Cardiac septum (tissue), 1 donor: ENCODE measurements at regions of chr6 and their contacts with region 1.

Region 1: GRCh38 chr6:39347906-39348585 is 25.5 kb upstream of the KCNK16 start:
- DNase-seq: no peak

Region 2: GRCh38 chr6:39302669-39303424 is 45.2 kb before region 1 on chr6:
- intact Hi-C with region 1: no loop called
- DNase-seq: peak; percentile 85

Region 3: GRCh38 chr6:39330057-39330456 is 18.0 kb before region 1 on chr6:
- intact Hi-C with region 1: no loop called
- DNase-seq: no peak

Region 4: DNA sequence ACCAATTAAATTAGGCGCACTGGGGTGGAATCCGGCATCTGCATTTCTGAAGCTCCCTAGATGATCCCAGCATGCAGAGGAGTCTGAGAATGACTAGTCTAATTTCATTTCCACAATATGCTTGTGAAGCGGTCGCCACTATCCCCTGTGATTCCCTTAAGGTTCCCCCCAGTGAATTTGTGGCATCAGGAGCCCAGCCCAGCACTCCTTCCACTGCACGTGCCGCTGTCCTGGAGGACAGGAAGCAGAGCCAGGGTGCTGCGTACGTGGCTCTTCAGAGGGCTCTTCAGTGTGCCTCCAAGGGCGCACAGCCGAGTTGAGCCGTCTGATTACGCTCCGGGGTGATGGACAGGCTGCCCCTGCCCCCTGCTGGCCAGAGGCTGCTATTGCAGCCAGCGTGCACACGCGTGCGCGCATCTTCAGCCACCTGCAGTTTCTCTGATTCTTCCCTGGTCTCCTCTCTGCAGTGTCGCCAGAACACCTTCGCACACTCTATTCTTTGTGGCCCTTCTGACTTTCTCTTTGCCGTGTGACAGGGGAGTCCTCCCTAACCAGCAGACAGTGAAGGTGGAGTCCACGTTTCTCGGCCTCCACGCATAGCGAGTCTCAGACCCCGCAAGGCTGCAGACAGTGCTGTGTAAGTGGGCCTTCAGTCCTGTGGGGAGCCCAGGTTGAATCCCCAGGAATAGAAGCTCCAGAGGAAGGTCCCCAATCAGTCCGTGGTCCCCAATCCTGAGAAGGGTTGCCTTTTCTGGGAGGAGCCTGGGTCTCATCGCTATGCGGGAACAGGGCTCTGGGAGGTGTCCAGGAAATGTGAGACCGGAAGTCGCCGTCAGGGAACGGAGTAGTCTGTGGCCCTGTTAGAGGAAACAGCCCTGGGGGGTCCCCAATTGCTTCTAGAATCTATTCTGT is 1970.9 kb after region 1 on chr6:
- intact Hi-C with region 1: loop called (anchors 10 kb)
- DNase-seq: peak; percentile 92